ENCODE measurements at regions of chr7 and their contacts with region 1.

Region 1: DNA sequence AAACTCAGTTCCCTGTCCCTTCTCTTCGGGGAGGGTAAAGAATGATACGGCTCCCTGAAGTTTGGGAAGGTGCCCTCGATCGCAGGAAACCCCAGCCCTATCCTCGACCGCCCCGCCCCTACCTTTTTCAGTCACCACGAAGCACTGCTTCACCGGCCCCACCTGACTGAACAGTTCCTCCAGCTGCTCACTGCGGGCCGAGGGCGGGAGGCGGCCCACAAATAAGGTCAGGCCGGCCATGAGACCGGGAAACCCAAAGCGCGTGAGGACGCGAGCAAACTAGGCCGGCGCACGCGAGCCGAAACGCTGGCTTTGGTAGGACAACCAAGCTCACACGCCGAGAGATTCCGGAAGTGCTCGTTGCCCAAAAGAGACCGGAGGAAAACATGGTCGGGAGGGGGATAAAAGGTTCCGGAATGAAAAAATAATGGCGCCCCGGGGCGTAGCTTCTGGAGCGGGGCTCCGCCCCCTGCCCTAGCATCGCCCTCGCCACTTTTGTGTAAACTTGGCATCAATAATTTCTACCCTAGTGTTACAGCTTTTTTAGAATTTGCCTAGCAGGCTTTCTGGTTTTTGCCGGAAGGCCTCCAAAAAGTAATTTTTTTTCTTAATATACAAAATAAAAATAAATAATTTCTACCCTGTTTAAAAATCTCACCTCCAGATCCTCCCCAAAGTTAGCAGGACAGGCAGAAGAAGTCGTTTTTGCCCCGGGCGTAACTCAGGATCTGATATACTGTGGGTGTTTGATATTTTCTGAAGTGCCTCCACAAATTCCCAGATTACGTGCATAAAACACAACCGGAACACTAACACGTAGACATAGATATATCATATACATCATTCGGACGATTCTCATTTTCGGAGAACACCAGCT is at the start of gene RBM28:
- DNase-seq: peak; percentile 92 to 98
- ATAC-seq: peak; percentile 87 to 95
- H3K4me3 ChIP-seq: peak within 1 kb of the TSS; percentile 94
- H3K27ac ChIP-seq: peak within 1 kb of the TSS; percentile 89 to 94
- H3K4me1 ChIP-seq: peaks cover 20% of the 10 kb centered on the region; the same call in 2 of the 3 replicates
- CTCF ChIP-seq: no peak
- EP300 ChIP-seq: no peak
- POLR2A ChIP-seq: peak; percentile 96
- RAD21 ChIP-seq: no peak
- polyA plus RNA-seq, gene RBM28: 51.9 and 77.3 TPM in 2 replicates

Region 2: DNA sequence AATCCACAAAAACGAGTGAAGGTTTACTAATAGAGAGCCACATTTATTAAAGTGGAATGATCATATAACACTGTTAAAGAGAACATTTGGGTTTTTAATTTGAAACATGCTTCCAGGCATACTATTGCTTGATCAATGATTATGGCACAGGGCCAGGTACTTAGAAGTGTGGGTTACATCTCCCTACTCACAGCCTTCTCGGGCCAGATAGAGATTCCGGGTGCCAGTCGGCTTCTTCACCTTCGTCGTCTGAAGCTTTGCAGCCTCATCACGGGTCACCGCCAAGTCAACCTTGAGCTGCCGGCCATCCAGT is 19.5 kb before region 1 on chr7:
- CTCF ChIA-PET with region 1: interaction called, 11 read pairs
- POLR2A ChIA-PET with region 1: interaction called, 4 read pairs
- DNase-seq: no peak
- ATAC-seq: no peak
- H3K4me3 ChIP-seq: no peak overlapping the region
- H3K27ac ChIP-seq: no peak overlapping the region
- H3K4me1 ChIP-seq: no peaks in the 10 kb centered on the region
- CTCF ChIP-seq: no peak
- EP300 ChIP-seq: no peak
- POLR2A ChIP-seq: no peak
- RAD21 ChIP-seq: no peak

Region 3: DNA sequence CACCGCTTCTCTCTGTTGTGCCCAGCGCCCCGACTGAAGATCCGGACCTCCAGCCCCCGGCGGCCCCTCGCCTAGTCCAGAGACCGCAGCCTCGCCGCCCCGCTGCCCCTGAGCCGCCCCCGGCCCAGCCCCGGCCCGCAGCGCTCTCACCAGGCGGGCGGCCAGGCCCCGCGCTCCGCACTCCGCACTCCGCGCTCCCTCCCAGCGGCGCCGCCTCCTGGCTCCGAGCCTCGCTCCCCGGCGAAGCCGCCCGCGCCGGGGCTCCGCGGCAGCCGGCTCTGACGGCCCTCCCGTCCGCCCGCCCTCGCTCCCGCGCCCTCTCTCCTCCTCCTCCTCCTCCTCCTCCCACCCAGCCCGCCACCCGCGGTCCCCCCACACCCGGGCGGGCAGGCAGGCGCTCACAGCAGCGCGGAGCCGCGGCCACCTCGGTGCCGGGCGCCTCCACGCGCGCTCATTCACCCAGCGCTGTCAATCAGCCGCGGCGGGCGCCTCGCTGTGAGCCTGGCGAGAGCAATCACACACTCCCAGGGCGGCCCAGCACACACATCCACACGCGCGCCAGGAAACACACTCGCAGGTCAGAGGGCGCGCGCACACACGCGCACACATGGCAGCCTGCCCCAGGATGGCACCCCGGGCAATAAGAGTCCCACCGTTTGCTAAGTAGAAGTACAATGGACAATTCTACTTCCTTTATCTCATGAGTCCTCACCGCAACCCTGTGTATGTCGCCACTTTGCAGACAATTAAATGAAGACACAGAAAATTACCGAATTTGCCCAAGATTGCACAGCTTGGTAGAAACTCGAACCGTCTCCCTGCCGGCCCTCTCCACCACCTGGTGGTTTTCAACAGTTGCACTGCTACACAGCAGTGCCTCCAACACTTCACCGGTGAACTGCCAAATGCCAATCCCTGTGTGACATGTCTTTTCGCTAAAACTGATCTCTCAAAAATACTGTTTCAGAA is 17.9 kb after region 1 on chr7 and contains the start of gene PRRT4:
- CTCF ChIA-PET with region 1: interaction called, 92 read pairs
- POLR2A ChIA-PET with region 1: interaction called, 4 read pairs
- DNase-seq: peak; percentile 45 to 63
- ATAC-seq: peak; percentile 70 to 83
- H3K4me3 ChIP-seq: peak within 1 kb of the TSS; percentile 66
- H3K27ac ChIP-seq: peak within 1 kb of the TSS; percentile 34 to 78; a peak in 5 of 6 replicates
- H3K4me1 ChIP-seq: no peaks in the 10 kb centered on the region
- CTCF ChIP-seq: 0 out of 3 replicates have a peak, but pooled peaks have one; percentile 13
- EP300 ChIP-seq: no peak
- POLR2A ChIP-seq: no peak
- RAD21 ChIP-seq: no peak
- polyA plus RNA-seq, gene PRRT4: 0.17 and 0.18 TPM in 2 replicates

Region 4: GRCh38 chr7:128420773-128421172 is 77.0 kb after region 1 on chr7:
- CTCF ChIA-PET with region 1: interaction called, 162 read pairs
- POLR2A ChIA-PET with region 1: no interaction called
- DNase-seq: no peak
- ATAC-seq: no peak
- H3K4me3 ChIP-seq: no peak overlapping the region
- H3K27ac ChIP-seq: no peak overlapping the region
- H3K4me1 ChIP-seq: no peaks in the 10 kb centered on the region; the same call in 2 of the 3 replicates
- CTCF ChIP-seq: no peak
- EP300 ChIP-seq: no peak
- POLR2A ChIP-seq: no peak
- RAD21 ChIP-seq: no peak

Measured in A549 (cell line).